K562 (cell line): ENCODE measurements at regions of chr6 and their contacts with region 1.

Region 1: DNA sequence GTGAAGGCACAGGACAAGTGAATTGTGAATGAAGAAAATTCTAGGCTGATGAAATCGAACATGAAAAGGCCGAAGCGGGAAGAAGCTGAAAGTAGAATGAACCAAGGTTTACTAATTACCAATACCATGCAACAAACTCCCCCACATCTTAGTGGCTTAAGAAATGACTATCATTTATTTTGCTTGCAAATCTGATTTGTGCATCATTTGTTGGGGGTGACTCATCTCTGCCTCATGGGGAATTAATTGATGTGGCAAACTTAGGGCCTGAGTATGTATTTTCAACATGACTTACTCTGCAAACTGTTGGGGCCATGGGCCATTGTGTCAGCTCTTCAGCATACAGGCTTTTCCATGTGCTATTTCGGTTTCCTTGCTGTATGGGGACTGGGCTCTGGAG is 26.8 kb downstream of the PPP1R14C start:
- DNase-seq: peak in 1 of 4 experiments; percentile 40
- ATAC-seq: no peak
- H3K4me3 ChIP-seq: no peak overlapping the region
- H3K27ac ChIP-seq: peak overlapping the region; percentile 96; the same call in 1 of the 3 replicates
- H3K4me1 ChIP-seq: peaks cover 12 to 28% of the 10 kb centered on the region in 2 experiments; a peak in 4 of 5 replicates
- H3K27me3 ChIP-seq: no peaks in the 10 kb centered on the region
- CTCF ChIP-seq: no peak
- EP300 ChIP-seq: no peak
- POLR2A ChIP-seq: no peak
- RAD21 ChIP-seq: no peak

Region 2: GRCh38 chr6:150184850-150185731 is 15.5 kb after region 1 on chr6:
- CTCF ChIA-PET with region 1: no interaction called
- POLR2A ChIA-PET with region 1: interaction called, 15 read pairs
- in situ Hi-C with region 1: no loop called
- intact Hi-C with region 1: no loop called
- DNase-seq: no peak
- ATAC-seq: peak; percentile 23
- H3K4me3 ChIP-seq: no peak overlapping the region
- H3K27ac ChIP-seq: no peak overlapping the region
- H3K4me1 ChIP-seq: peaks cover 15 to 32% of the 10 kb centered on the region in 2 experiments; a peak in 4 of 5 replicates
- H3K27me3 ChIP-seq: no peaks in the 10 kb centered on the region
- CTCF ChIP-seq: no peak
- EP300 ChIP-seq: no peak
- POLR2A ChIP-seq: no peak
- RAD21 ChIP-seq: no peak

Region 3: GRCh38 chr6:150273457-150274309 is 104.1 kb after region 1 on chr6:
- CTCF ChIA-PET with region 1: no interaction called
- POLR2A ChIA-PET with region 1: no interaction called
- in situ Hi-C with region 1: no loop called
- intact Hi-C with region 1: loop called (anchors 2 kb)
- DNase-seq: peak in 1 of 4 experiments; percentile 59
- ATAC-seq: no peak
- H3K4me3 ChIP-seq: no peak overlapping the region
- H3K27ac ChIP-seq: peak overlapping the region; percentile 3; the same call in 2 of the 3 replicates
- H3K4me1 ChIP-seq: peaks cover 76 to 93% of the 10 kb centered on the region in 2 experiments
- H3K27me3 ChIP-seq: no peaks in the 10 kb centered on the region
- CTCF ChIP-seq: no peak
- EP300 ChIP-seq: peak; percentile 16; the same call in 1 of the 2 replicates
- POLR2A ChIP-seq: no peak
- RAD21 ChIP-seq: 0 out of 4 replicates have a peak, but pooled peaks of 1 of the 2 experiments have one; percentile 9

Region 4: GRCh38 chr6:150320442-150320841 is 150.8 kb after region 1 on chr6:
- CTCF ChIA-PET with region 1: no interaction called
- POLR2A ChIA-PET with region 1: no interaction called
- in situ Hi-C with region 1: no loop called
- intact Hi-C with region 1: loop called (anchors 5 kb)
- DNase-seq: peak in 2 of 4 experiments; percentile 33 to 57
- ATAC-seq: peak; percentile 55
- H3K4me3 ChIP-seq: no peak overlapping the region
- H3K27ac ChIP-seq: no peak overlapping the region; the same call in 2 of the 3 replicates
- H3K4me1 ChIP-seq: peaks cover 10 to 38% of the 10 kb centered on the region in 2 experiments; a peak in 4 of 5 replicates
- H3K27me3 ChIP-seq: no peaks in the 10 kb centered on the region
- CTCF ChIP-seq: no peak; a peak in 1 of 6 replicates
- EP300 ChIP-seq: no peak
- POLR2A ChIP-seq: no peak
- RAD21 ChIP-seq: 0 out of 4 replicates have a peak, but pooled peaks of 1 of the 2 experiments have one; percentile 26